ENCODE measurements at regions of chr6 and their contacts with region 1.

Region 1: DNA sequence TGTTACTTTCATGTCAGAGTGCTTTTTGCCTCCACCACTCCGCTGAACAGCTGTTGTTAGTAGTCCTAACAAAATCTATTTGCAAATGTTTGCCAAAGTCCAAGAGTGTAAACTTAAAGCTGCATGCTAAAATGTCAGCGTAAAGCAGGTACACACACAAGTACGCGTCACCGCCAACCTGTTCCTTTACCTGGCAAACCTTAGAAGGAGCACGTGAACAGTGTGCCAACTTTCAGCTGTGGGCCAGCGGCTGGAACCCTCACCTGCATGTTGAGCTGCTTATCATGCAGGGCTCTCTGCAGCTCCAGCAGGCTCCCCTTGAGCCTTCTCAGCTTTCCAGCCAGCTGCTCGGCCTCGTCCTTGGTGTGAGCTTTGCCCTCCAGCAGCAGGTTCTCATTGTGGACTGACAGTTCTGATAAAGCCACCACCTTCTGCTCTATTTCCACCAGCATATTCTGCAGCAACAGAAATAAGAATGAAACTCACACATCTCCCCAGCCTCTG is 359.3 kb downstream of the SYNE1 start:
- DNase-seq: peak; percentile 77
- ATAC-seq: peak; percentile 99
- H3K4me3 ChIP-seq: peak overlapping the region; percentile 5 to 54 (median 29); a peak in 4 of 6 replicates
- H3K27ac ChIP-seq: peak overlapping the region; percentile 71
- H3K4me1 ChIP-seq: peaks cover 25% of the 10 kb centered on the region
- H3K27me3 ChIP-seq: no peaks in the 10 kb centered on the region
- CTCF ChIP-seq: no peak; the same call in 1 of the 2 replicates
- EP300 ChIP-seq: 0 out of 4 replicates have a peak, but pooled peaks of 1 of the 2 experiments have one; percentile 11
- POLR2A ChIP-seq: 0 out of 4 replicates have a peak, but pooled peaks of 1 of the 2 experiments have one; percentile 24
- RAD21 ChIP-seq: peak; percentile 48; the same call in 1 of the 2 replicates

Region 2: GRCh38 chr6:151669196-151669688 is 608.6 kb before region 1 on chr6:
- CTCF ChIA-PET with region 1: no interaction called
- POLR2A ChIA-PET with region 1: interaction called, 3 read pairs
- in situ Hi-C with region 1: no loop called
- intact Hi-C with region 1: loop called (anchors 1 kb)
- DNase-seq: no peak
- ATAC-seq: peak; percentile 13; the same call in 2 of the 3 replicates
- H3K4me3 ChIP-seq: peak overlapping the region in 1 of 3 experiments; percentile 44; a peak in 3 of 6 replicates
- H3K27ac ChIP-seq: peak overlapping the region; percentile 83
- H3K4me1 ChIP-seq: peaks cover 42% of the 10 kb centered on the region
- H3K27me3 ChIP-seq: no peaks in the 10 kb centered on the region
- CTCF ChIP-seq: no peak
- EP300 ChIP-seq: no peak
- POLR2A ChIP-seq: no peak
- RAD21 ChIP-seq: no peak

Region 3: DNA sequence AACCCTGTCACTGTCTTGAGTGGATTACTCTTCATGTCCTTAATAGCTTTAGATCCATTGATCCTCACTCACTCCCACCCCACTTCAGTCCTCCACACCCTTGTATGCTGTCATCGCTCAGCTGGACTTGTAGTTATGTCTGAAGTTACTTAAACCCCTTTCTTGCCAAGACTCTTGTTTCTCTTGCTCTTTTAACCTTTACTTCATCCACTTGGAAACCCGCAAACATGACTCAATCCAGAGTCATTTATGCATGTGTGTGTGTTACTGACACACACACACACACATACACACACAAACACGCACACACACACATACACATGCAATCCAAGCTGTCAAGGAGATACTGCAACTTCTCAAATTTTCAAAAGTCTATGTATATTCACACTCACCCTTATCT is 17.5 kb after region 1 on chr6:
- CTCF ChIA-PET with region 1: no interaction called
- POLR2A ChIA-PET with region 1: interaction called, 11 read pairs
- in situ Hi-C with region 1: no loop called
- intact Hi-C with region 1: no loop called
- DNase-seq: no peak
- ATAC-seq: no peak
- H3K4me3 ChIP-seq: no peak overlapping the region
- H3K27ac ChIP-seq: no peak overlapping the region
- H3K4me1 ChIP-seq: peaks cover 25% of the 10 kb centered on the region
- H3K27me3 ChIP-seq: no peaks in the 10 kb centered on the region
- CTCF ChIP-seq: no peak
- EP300 ChIP-seq: no peak
- POLR2A ChIP-seq: no peak
- RAD21 ChIP-seq: no peak

Region 4: DNA sequence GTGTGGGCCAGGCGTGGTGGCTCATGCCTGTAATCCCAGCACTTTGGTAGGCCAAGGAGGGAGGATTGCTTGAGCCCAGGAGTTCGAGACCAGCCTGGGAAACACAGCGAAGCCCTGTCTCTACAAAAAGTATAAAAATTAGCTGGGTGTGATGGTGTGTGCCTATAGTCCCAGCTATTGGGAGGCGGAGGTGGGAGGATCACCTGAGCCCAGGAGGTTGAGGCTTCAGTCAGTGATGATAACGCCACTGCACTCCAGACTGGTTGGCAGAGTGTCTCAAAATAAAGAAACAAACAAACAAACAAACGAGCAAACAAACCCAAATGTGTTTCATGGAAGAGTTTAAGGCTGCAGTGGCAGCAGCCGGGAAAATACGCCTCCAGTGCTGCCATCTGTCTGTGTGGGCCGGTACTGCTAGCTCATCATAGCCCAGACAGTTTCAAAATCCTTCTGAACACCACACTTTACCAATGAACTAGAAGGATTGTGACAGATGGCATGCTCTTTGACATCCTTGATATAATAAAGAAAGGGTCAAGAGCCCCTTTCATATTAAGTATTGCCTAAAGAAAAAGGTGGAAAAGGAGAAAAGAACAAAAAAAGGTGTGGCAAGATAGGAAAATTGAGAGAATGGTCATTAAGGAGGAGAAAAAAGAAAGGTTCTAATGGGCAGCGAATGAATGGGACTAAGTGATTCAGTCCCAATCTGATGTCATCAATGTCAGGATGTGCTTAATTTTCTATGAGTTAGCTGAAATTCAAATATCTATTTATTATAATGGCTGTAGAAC is 60.7 kb after region 1 on chr6:
- CTCF ChIA-PET with region 1: no interaction called
- POLR2A ChIA-PET with region 1: no interaction called
- in situ Hi-C with region 1: no loop called
- intact Hi-C with region 1: loop called (anchors 2 kb)
- DNase-seq: peak; percentile 23
- ATAC-seq: peak; percentile 93
- H3K4me3 ChIP-seq: no peak overlapping the region
- H3K27ac ChIP-seq: no peak overlapping the region
- H3K4me1 ChIP-seq: no peaks in the 10 kb centered on the region
- H3K27me3 ChIP-seq: no peaks in the 10 kb centered on the region
- CTCF ChIP-seq: peak; percentile 87
- EP300 ChIP-seq: no peak
- POLR2A ChIP-seq: no peak
- RAD21 ChIP-seq: peak; percentile 72